Naive thymus-derived CD4-positive, alpha-beta T cell (primary cell): ENCODE measurements at regions of chr1 and their contacts with region 1.

Region 1: GRCh38 chr1:201114236-201115131 is 2.3 kb upstream of the CACNA1S start:
- DNase-seq: peak; percentile 58 to 78 (median 72)
- ATAC-seq: peak; percentile 90
- H3K4me3 ChIP-seq: peak overlapping the region; percentile 85
- H3K4me3 Mint-ChIP-seq: peak overlapping the region; percentile 86 to 94 (median 91)
- H3K27ac ChIP-seq: peak overlapping the region; percentile 65
- H3K27ac Mint-ChIP-seq: peak overlapping the region in 8 of 9 donors; percentile 74 to 92 (median 82)
- H3K4me1 ChIP-seq: peaks cover 0 to 7% of the 10 kb centered on the region in 2 donors
- H3K4me1 Mint-ChIP-seq: peaks cover 1 to 23% (median 14%) of the 10 kb centered on the region in 7 donors
- H3K27me3 ChIP-seq: no peaks in the 10 kb centered on the region
- H3K27me3 Mint-ChIP-seq: peaks cover 0 to 43% (median 0%) of the 10 kb centered on the region in 5 donors

Region 2: DNA sequence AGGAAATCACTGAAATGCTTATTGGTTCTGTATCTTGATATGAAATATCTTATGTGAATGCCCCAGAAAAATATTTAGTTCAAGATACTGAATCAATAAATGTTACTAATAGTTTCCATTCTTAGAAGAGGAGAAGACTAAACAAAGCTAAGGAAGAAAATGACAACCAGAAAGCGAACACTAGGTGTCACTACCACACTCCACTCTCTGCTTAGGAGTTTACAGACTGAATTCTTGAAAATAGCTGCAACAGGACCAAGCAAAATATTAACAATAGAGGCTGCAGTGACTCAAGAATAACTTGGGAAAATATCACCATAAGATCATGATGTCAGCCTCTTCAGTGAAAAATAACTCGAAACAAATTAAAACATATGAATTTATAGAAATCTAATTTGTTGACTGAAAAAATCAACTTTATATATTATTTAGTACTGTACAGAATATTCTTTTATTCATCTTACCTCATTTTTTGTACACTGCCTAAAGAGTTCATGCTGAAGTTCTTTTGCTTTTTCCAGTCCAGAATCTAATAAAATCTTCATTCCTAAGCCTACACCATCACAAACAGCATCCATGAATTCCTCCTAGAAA is 555.5 kb before region 1 on chr1:
- CTCF ChIA-PET with region 1: no interaction called
- POLR2A ChIA-PET with region 1: no interaction called
- intact Hi-C with region 1: loop called in 1 of 2 experiments (anchors 1 kb)
- DNase-seq: peak in 4 of 9 donors; percentile 10 to 26 (median 18)
- ATAC-seq: peak; percentile 48
- H3K4me3 ChIP-seq: no peak overlapping the region
- H3K4me3 Mint-ChIP-seq: no peak overlapping the region
- H3K27ac ChIP-seq: no peak overlapping the region
- H3K27ac Mint-ChIP-seq: no peak overlapping the region
- H3K4me1 ChIP-seq: no peaks in the 10 kb centered on the region
- H3K4me1 Mint-ChIP-seq: peaks cover 0 to 17% (median 6%) of the 10 kb centered on the region in 7 donors
- H3K27me3 ChIP-seq: no peaks in the 10 kb centered on the region
- H3K27me3 Mint-ChIP-seq: no peaks in the 10 kb centered on the region

Region 3: GRCh38 chr1:200971955-200972711 is 142.4 kb before region 1 on chr1:
- CTCF ChIA-PET with region 1: interaction called, 10 read pairs
- POLR2A ChIA-PET with region 1: no interaction called
- intact Hi-C with region 1: loop called (anchors 1 kb)
- DNase-seq: peak; percentile 48 to 73 (median 59)
- ATAC-seq: peak; percentile 71
- H3K4me3 ChIP-seq: no peak overlapping the region
- H3K4me3 Mint-ChIP-seq: no peak overlapping the region
- H3K27ac ChIP-seq: no peak overlapping the region
- H3K27ac Mint-ChIP-seq: peak overlapping the region in 2 of 9 donors; percentile 38 to 84
- H3K4me1 ChIP-seq: no peaks in the 10 kb centered on the region
- H3K4me1 Mint-ChIP-seq: peaks cover 0 to 6% (median 0%) of the 10 kb centered on the region in 7 donors
- H3K27me3 ChIP-seq: no peaks in the 10 kb centered on the region
- H3K27me3 Mint-ChIP-seq: no peaks in the 10 kb centered on the region

Region 4: GRCh38 chr1:201085916-201086735 is 28.4 kb before region 1 on chr1:
- CTCF ChIA-PET with region 1: interaction called, 6 read pairs
- POLR2A ChIA-PET with region 1: interaction called, 12 read pairs
- intact Hi-C with region 1: loop called (anchors 1 kb)
- DNase-seq: peak in 6 of 9 donors; percentile 14 to 38 (median 20)
- ATAC-seq: peak; percentile 68
- H3K4me3 ChIP-seq: no peak overlapping the region
- H3K4me3 Mint-ChIP-seq: no peak overlapping the region
- H3K27ac ChIP-seq: no peak overlapping the region
- H3K27ac Mint-ChIP-seq: peak overlapping the region in 1 of 9 donors; percentile 2
- H3K4me1 ChIP-seq: no peaks in the 10 kb centered on the region
- H3K4me1 Mint-ChIP-seq: peaks cover 0 to 1% (median 0%) of the 10 kb centered on the region in 7 donors
- H3K27me3 ChIP-seq: no peaks in the 10 kb centered on the region
- H3K27me3 Mint-ChIP-seq: peaks cover 0 to 27% (median 7%) of the 10 kb centered on the region in 5 donors

Region 5: GRCh38 chr1:201385299-201385891 is 270.9 kb after region 1 on chr1:
- CTCF ChIA-PET with region 1: no interaction called
- POLR2A ChIA-PET with region 1: no interaction called
- intact Hi-C with region 1: no loop called
- DNase-seq: peak in 3 of 9 donors; percentile 7 to 41 (median 17)
- ATAC-seq: peak; percentile 65
- H3K4me3 ChIP-seq: no peak overlapping the region
- H3K4me3 Mint-ChIP-seq: no peak overlapping the region
- H3K27ac ChIP-seq: no peak overlapping the region
- H3K27ac Mint-ChIP-seq: no peak overlapping the region
- H3K4me1 ChIP-seq: no peaks in the 10 kb centered on the region
- H3K4me1 Mint-ChIP-seq: peaks cover 0 to 2% (median 0%) of the 10 kb centered on the region in 7 donors
- H3K27me3 ChIP-seq: no peaks in the 10 kb centered on the region
- H3K27me3 Mint-ChIP-seq: peaks cover 0 to 33% (median 5%) of the 10 kb centered on the region in 5 donors

Region 6: GRCh38 chr1:201506556-201507359 is 392.3 kb after region 1 on chr1 and contains the start of gene CSRP1:
- CTCF ChIA-PET with region 1: no interaction called
- POLR2A ChIA-PET with region 1: no interaction called
- intact Hi-C with region 1: loop called in 1 of 2 experiments (anchors 2 kb)
- DNase-seq: peak; percentile 64 to 84 (median 80)
- ATAC-seq: peak; percentile 97
- H3K4me3 ChIP-seq: peak within 1 kb of the TSS; percentile 87
- H3K4me3 Mint-ChIP-seq: peak within 1 kb of the TSS; percentile 88 to 94 (median 91)
- H3K27ac ChIP-seq: peak within 1 kb of the TSS; percentile 74
- H3K27ac Mint-ChIP-seq: peak within 1 kb of the TSS; percentile 83 to 97 (median 91)
- H3K4me1 ChIP-seq: peaks cover 20 to 28% of the 10 kb centered on the region in 2 donors
- H3K4me1 Mint-ChIP-seq: peaks cover 30 to 61% (median 57%) of the 10 kb centered on the region in 7 donors
- H3K27me3 ChIP-seq: no peaks in the 10 kb centered on the region
- H3K27me3 Mint-ChIP-seq: no peaks in the 10 kb centered on the region
- total RNA-seq, gene CSRP1: 24.2 to 83.1 (median 37.7) TPM